B cell (primary cell): ENCODE measurements at regions of chr11 and their contacts with region 1.

Region 1: DNA sequence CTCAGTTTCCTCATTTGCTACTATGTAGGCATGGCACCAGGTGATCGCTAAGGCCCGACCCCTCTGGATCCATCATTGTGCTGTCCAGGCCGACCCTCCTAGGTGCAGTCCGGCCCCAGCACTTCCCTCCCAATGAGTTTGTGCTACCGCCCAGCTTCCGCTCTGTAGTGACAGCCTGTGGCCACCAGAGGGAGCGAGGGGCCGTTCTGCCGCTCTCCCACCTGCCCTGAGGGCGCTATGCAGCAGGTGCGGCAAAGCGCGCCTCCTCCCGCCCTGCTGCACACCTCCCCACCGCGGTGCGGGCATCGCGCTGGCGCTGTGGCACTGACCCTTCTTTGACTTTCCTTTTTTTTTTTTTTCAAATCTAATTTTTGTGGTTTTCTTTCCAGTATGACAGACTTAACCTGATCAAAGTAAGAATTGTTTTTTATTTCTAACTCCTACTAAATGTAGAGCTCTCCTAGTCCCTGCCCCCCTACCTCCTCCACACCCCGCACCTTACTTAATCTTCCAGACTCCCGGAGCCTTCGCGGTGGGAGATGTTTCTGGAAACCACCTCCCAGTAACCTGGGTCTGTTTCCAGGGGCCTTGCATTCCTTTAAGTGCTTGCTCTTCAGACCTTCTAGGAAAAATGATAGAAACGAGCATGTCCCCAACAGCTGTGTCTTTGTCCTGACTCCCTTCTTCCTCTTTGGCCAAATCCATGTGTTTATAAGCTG is 73.7 kb downstream of the SCN3B start:
- DNase-seq: peak; percentile 74
- ATAC-seq: peak; percentile 93
- H3K4me3 ChIP-seq: no peak overlapping the region
- H3K4me3 Mint-ChIP-seq: no peak overlapping the region
- H3K27ac ChIP-seq: no peak overlapping the region
- H3K27ac Mint-ChIP-seq: no peak overlapping the region
- H3K4me1 ChIP-seq: peaks cover 9 to 16% of the 10 kb centered on the region in 2 donors
- H3K4me1 Mint-ChIP-seq: peaks cover 18% of the 10 kb centered on the region
- H3K27me3 ChIP-seq: no peaks in the 10 kb centered on the region
- H3K27me3 Mint-ChIP-seq: no peaks in the 10 kb centered on the region
- CTCF ChIP-seq: peak; percentile 94

Region 2: GRCh38 chr11:123407130-123407995 is 173.4 kb before region 1 on chr11:
- CTCF ChIA-PET with region 1: interaction called, 36 read pairs
- POLR2A ChIA-PET with region 1: no interaction called
- intact Hi-C with region 1: no loop called
- DNase-seq: peak; percentile 39
- ATAC-seq: peak; percentile 39
- H3K4me3 ChIP-seq: no peak overlapping the region
- H3K4me3 Mint-ChIP-seq: no peak overlapping the region
- H3K27ac ChIP-seq: no peak overlapping the region
- H3K27ac Mint-ChIP-seq: no peak overlapping the region
- H3K4me1 ChIP-seq: no peaks in the 10 kb centered on the region
- H3K4me1 Mint-ChIP-seq: peaks cover 12% of the 10 kb centered on the region
- H3K27me3 ChIP-seq: peaks cover 0 to 2% (median 0%) of the 10 kb centered on the region in 4 experiments
- H3K27me3 Mint-ChIP-seq: peaks cover 2% of the 10 kb centered on the region
- CTCF ChIP-seq: peak; percentile 59

Region 3: DNA sequence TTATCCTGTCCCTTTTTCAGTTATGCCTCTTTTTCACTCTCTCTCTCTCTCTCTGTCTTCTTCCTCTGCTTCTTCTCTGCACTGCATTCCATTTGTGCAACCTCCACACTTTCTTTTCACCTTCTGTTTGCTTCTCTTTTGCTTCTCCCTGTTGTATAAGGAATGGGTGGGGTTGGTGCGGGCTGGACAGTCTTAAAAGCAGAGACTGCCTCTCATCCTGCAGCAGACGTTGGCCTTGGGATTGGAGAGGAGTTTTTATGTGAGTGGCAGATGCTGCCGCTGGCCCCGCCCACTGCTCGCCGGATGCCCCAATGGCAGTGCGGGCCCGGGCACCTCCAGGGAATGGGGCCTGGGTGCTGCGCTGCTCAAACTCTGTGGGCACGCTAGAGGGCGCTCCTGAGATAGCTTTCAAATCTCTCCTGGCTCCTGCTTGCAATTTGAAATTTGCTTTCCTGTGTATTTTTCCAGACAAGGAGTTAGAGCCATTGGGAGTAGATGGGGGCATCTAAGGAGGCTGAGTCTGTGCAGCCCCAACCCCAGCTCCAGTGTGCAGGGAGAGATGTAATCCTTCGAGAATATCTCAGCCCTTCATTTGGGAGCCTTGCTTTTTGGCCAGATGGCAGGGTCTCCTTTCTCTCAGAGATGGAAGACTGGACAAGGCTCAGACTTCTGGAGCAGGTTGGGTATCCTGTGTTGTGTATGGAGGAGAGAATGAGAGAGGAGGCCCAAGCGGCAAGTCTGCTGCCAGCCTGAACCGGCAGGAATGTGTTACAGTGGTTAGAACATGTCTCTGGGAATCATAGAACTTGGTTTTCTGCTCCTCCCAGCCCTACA is 69.5 kb before region 1 on chr11:
- CTCF ChIA-PET with region 1: interaction called, 21 read pairs
- POLR2A ChIA-PET with region 1: no interaction called
- intact Hi-C with region 1: loop called (anchors 1 kb)
- DNase-seq: peak; percentile 66
- ATAC-seq: peak; percentile 99
- H3K4me3 ChIP-seq: no peak overlapping the region
- H3K4me3 Mint-ChIP-seq: peak overlapping the region; percentile 42
- H3K27ac ChIP-seq: no peak overlapping the region
- H3K27ac Mint-ChIP-seq: no peak overlapping the region
- H3K4me1 ChIP-seq: peaks cover 3% of the 10 kb centered on the region in 2 donors
- H3K4me1 Mint-ChIP-seq: peaks cover 8% of the 10 kb centered on the region
- H3K27me3 ChIP-seq: no peaks in the 10 kb centered on the region
- H3K27me3 Mint-ChIP-seq: no peaks in the 10 kb centered on the region
- CTCF ChIP-seq: peak; percentile 86

Region 4: GRCh38 chr11:123560006-123560405 is 20.7 kb before region 1 on chr11:
- CTCF ChIA-PET with region 1: interaction called, 27 read pairs
- POLR2A ChIA-PET with region 1: no interaction called
- intact Hi-C with region 1: no loop called
- DNase-seq: peak; percentile 54
- ATAC-seq: peak; percentile 82
- H3K4me3 ChIP-seq: peak overlapping the region in 3 of 5 experiments; percentile 17 to 46 (median 33)
- H3K4me3 Mint-ChIP-seq: peak overlapping the region; percentile 96
- H3K27ac ChIP-seq: no peak overlapping the region
- H3K27ac Mint-ChIP-seq: peak overlapping the region; percentile 88
- H3K4me1 ChIP-seq: peaks cover 12 to 19% of the 10 kb centered on the region in 2 donors
- H3K4me1 Mint-ChIP-seq: peaks cover 21% of the 10 kb centered on the region
- H3K27me3 ChIP-seq: no peaks in the 10 kb centered on the region
- H3K27me3 Mint-ChIP-seq: no peaks in the 10 kb centered on the region
- CTCF ChIP-seq: no peak

Region 5: DNA sequence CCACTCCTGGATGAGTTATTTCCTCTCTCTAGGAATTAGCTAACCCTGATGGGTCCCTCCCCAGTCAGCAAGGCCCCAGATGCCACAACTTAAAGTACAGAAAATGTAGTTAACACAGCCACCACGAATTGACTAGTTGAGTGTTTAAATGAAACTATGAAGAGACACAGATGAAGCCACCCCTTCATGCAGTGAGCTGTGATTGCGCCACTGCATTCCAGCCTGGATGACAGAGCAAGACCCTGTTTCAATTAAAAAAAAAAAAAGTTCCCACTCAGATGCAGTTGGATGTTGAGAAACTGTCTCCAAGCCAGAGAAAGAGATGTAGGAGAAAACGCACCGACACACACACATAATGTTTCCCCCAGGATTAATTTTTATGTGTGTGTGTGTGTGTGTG is 20.4 kb after region 1 on chr11:
- CTCF ChIA-PET with region 1: no interaction called
- POLR2A ChIA-PET with region 1: no interaction called
- intact Hi-C with region 1: no loop called
- DNase-seq: no peak
- ATAC-seq: no peak
- H3K4me3 ChIP-seq: no peak overlapping the region
- H3K4me3 Mint-ChIP-seq: no peak overlapping the region
- H3K27ac ChIP-seq: no peak overlapping the region
- H3K27ac Mint-ChIP-seq: no peak overlapping the region
- H3K4me1 ChIP-seq: no peaks in the 10 kb centered on the region
- H3K4me1 Mint-ChIP-seq: no peaks in the 10 kb centered on the region
- H3K27me3 ChIP-seq: no peaks in the 10 kb centered on the region
- H3K27me3 Mint-ChIP-seq: no peaks in the 10 kb centered on the region
- CTCF ChIP-seq: no peak

Region 6: GRCh38 chr11:123707606-123708205 is 127.0 kb after region 1 on chr11:
- CTCF ChIA-PET with region 1: interaction called, 40 read pairs
- POLR2A ChIA-PET with region 1: no interaction called
- intact Hi-C with region 1: loop called (anchors 1 kb)
- DNase-seq: peak; percentile 55
- ATAC-seq: no peak
- H3K4me3 ChIP-seq: no peak overlapping the region
- H3K4me3 Mint-ChIP-seq: no peak overlapping the region
- H3K27ac ChIP-seq: no peak overlapping the region
- H3K27ac Mint-ChIP-seq: no peak overlapping the region
- H3K4me1 ChIP-seq: peaks cover 1 to 3% of the 10 kb centered on the region in 2 donors
- H3K4me1 Mint-ChIP-seq: peaks cover 7% of the 10 kb centered on the region
- H3K27me3 ChIP-seq: peaks cover 0 to 3% (median 0%) of the 10 kb centered on the region in 4 experiments
- H3K27me3 Mint-ChIP-seq: peaks cover 10% of the 10 kb centered on the region
- CTCF ChIP-seq: peak; percentile 75